AG04450 (cell line): ENCODE measurements at regions of chr2 and their contacts with region 1.

Region 1: DNA sequence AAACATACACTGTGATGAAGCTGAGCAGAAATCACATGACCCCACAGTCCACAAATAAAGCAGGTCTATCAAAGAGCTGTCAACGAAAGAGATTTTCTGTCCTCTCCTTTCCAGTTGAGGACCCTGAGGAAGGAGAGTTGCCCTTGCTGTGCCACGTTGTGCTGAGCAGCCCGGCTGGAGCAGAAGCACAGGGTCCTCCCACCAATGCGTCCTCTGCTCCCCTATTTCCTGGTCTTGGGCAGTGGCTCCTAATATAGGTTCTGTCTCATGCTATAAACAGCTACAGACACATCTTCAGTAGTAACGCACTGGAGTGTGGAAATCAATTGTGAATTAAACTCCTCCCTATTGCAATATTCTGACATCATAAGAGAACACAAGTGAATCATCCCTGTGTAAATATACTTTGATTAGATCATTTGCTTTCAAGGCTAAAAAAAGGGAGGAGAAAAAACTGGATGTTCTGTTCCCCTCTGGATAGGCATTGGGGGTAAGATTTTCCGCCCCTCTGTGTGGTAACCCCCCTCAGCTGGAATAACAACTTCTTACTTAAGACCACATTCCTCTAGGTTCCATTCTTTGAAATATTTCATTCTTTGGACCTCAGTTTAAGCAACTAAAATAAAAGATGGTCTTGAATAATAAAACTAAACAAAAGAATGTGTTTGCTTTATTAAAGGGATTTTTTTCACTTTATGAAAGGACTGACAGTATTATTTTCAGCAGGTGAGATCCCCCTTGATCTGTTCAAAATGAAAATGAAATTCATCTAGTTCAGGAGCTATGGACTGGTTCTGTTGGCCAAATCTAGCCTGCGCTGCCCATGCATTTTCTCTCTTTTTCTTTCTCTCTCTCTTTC is 8.3 kb upstream of the RHOB start:
- DNase-seq: no peak
- H3K4me3 ChIP-seq: no peak overlapping the region
- H3K27ac ChIP-seq: peak overlapping the region; percentile 69
- H3K27me3 ChIP-seq: no peaks in the 10 kb centered on the region
- CTCF ChIP-seq: no peak

Region 2: GRCh38 chr2:20424300-20425290 is 14.0 kb before region 1 on chr2:
- CTCF ChIA-PET with region 1: interaction called, 15 read pairs
- POLR2A ChIA-PET with region 1: interaction called, 4 read pairs
- DNase-seq: peak; percentile 81
- H3K4me3 ChIP-seq: no peak overlapping the region
- H3K27ac ChIP-seq: no peak overlapping the region
- H3K27me3 ChIP-seq: no peaks in the 10 kb centered on the region
- CTCF ChIP-seq: no peak

Region 3: GRCh38 chr2:20635675-20636584 is 197.4 kb after region 1 on chr2:
- CTCF ChIA-PET with region 1: interaction called, 83 read pairs
- POLR2A ChIA-PET with region 1: no interaction called
- DNase-seq: peak; percentile 53
- H3K4me3 ChIP-seq: no peak overlapping the region
- H3K27ac ChIP-seq: no peak overlapping the region
- H3K27me3 ChIP-seq: no peaks in the 10 kb centered on the region
- CTCF ChIP-seq: peak; percentile 96

Region 4: DNA sequence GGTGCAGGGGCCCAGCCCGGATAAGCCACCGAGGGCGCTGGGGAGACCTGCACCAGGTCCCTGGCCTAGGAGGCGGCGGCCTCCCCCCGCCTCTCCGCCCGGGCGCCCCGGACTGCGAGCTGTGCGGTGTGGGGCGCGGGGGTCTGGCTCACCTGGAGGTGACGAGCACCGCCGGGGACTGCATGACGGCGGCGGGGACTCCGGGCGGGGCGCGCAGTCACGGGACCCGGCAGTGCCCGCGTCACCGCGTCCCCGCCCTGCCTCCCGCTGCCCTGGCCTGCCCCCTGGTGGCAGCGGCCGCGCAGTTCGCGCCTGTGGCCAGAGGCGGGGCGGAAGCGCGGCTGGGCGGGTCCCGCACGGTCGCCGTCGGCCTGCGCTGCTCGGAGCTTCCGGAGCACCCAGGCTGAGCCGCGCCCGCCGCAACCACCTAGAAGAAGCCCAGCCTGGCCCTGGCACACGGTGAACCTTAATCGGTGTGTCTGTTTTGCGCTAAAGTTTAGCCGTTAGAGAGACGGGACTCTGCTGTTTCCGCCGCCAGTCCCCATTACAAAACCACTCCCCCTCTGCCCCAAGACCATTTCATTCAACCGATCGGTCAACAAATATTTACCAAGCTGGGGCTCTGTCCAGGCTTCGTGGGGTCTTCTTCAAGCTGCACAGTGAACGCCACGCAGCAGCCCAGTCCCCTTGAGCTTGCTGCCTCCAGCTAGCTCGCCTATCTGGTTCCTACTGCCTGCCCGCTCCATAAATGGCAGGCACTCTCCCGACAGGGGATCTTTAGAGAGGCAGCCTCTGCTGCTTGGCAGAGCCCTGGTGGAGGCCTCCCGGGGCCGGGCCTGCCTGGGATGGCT is 212.5 kb after region 1 on chr2 and contains the start of gene HS1BP3:
- CTCF ChIA-PET with region 1: interaction called, 26 read pairs
- POLR2A ChIA-PET with region 1: no interaction called
- DNase-seq: no peak
- H3K4me3 ChIP-seq: peak within 1 kb of the TSS; percentile 92
- H3K27ac ChIP-seq: peak within 1 kb of the TSS; percentile 3
- H3K27me3 ChIP-seq: peaks cover 15% of the 10 kb centered on the region
- CTCF ChIP-seq: peak; percentile 54
- polyA plus RNA-seq, gene HS1BP3: 14.2 and 16.1 TPM in 2 replicates